ENCODE measurements at regions of chr10 and their contacts with region 1.

Region 1: DNA sequence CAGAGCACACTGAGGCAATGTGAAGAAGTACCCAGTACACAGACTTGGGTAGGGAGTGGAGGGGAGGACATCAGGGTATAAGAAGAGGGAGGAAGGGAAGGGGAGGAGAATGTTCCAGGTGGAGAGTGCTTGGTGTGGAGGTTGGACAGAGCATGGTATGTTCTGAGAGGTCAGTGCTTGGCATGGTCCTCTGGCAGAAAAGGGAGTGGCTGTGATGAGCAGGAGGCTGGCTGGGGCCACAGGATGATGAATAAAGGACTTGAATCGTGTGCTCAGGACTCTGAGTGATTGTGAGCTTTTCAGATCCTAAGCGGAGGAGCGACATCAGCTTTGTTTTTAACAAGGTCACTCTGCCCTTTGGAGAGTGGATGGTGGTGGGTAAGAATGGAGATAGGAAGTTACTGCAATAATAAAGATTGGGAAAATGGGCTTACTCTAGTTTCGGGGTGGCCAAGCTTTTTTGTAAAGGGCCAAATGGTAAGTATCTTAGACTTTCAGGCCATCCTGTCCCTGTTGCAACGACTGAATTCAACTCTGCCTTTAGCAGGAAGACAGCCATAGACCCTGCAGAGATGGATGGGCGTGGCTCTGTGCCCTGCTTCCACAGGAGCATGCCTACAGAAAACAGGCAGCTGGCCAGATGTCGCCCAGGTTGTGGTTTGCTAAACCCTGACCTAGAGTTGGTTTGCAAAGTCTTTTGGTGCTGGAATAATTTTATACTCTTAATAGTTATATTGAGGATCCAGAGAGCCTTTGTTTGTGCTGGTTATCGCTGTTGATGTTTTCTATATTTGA is 8.4 kb downstream of the PPP2R2D start:
- DNase-seq: peak in 4 of 7 donors; percentile 37 to 64 (median 56)
- H3K4me3 ChIP-seq: no peak overlapping the region
- H3K27ac ChIP-seq: peak overlapping the region in 2 of 5 donors; percentile 22 to 55
- H3K4me1 ChIP-seq: peaks cover 28 to 52% of the 10 kb centered on the region in 2 donors
- H3K27me3 ChIP-seq: no peaks in the 10 kb centered on the region
- CTCF ChIP-seq: no peak
- POLR2A ChIP-seq: no peak

Region 2: GRCh38 chr10:131943021-131943814 is 34.0 kb after region 1 on chr10:
- intact Hi-C with region 1: loop called in 1 of 2 experiments (anchors 5 kb)
- DNase-seq: peak in 6 of 7 donors; percentile 59 to 78 (median 71)
- H3K4me3 ChIP-seq: no peak overlapping the region
- H3K27ac ChIP-seq: no peak overlapping the region
- H3K4me1 ChIP-seq: peaks cover 3 to 20% of the 10 kb centered on the region in 2 donors
- H3K27me3 ChIP-seq: no peaks in the 10 kb centered on the region
- CTCF ChIP-seq: peak in 5 of 6 experiments; percentile 50 to 69 (median 62)
- POLR2A ChIP-seq: no peak